K562 (cell line): ENCODE measurements at regions of chr1 and their contacts with region 1.

Region 1: GRCh38 chr1:100866041-100866900 is 28.4 kb downstream of the EXTL2 start:
- DNase-seq: peak; percentile 31 to 48 (median 38)
- ATAC-seq: peak; percentile 84
- H3K4me3 ChIP-seq: no peak overlapping the region
- H3K27ac ChIP-seq: no peak overlapping the region
- H3K4me1 ChIP-seq: no peaks in the 10 kb centered on the region
- H3K27me3 ChIP-seq: no peaks in the 10 kb centered on the region
- CTCF ChIP-seq: peak; percentile 39 to 77 (median 58); a peak in 4 of 6 replicates
- EP300 ChIP-seq: no peak
- POLR2A ChIP-seq: no peak
- RAD21 ChIP-seq: peak; percentile 94

Region 2: DNA sequence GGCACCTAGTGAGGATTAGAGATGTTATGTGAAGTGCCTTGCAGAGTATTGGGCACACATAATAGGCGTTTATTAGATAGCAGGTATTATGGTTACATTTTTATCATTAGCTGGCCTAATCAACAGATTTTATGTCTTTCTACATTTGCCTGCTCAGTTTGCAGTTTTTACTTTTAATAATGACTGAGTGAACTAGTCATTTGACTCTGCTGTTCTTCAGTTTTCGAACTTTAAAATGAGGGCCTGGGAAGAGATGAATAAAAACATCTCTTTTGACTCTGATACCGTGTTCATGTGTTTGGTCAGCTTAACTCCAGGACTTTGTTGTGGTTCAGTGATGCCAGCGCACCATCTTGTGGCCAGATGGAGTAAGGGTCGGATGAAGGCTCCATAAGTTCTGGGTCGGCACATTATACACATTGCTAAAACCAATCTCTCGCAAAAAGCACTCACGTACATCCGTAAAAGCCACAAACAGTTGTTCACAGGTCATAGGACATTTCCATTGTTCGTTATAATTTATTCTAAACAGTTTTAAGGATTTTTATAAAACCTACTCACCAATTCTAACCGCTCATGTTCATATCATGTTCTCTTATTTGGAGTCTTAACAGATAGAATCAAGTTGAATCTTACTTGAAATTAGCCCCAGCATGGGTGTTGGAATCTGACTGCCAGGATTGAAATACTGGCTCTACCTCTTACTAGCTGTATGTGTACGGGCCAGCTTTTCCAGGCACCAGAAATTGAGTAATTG is 406.7 kb before region 1 on chr1:
- CTCF ChIA-PET with region 1: interaction called, 13 read pairs
- POLR2A ChIA-PET with region 1: no interaction called
- in situ Hi-C with region 1: no loop called
- intact Hi-C with region 1: loop called (anchors 1 kb)
- DNase-seq: peak in 3 of 4 experiments; percentile 38 to 76 (median 57)
- ATAC-seq: peak; percentile 89
- H3K4me3 ChIP-seq: no peak overlapping the region
- H3K27ac ChIP-seq: no peak overlapping the region
- H3K4me1 ChIP-seq: peaks cover 0 to 6% of the 10 kb centered on the region in 2 experiments; a peak in 3 of 5 replicates
- H3K27me3 ChIP-seq: no peaks in the 10 kb centered on the region
- CTCF ChIP-seq: peak; percentile 72 to 86 (median 84)
- EP300 ChIP-seq: no peak
- POLR2A ChIP-seq: no peak
- RAD21 ChIP-seq: peak; percentile 90 to 91

Region 3: GRCh38 chr1:100543640-100544039 is 322.6 kb before region 1 on chr1:
- CTCF ChIA-PET with region 1: no interaction called
- POLR2A ChIA-PET with region 1: no interaction called
- in situ Hi-C with region 1: no loop called
- intact Hi-C with region 1: loop called (anchors 5 kb)
- DNase-seq: peak in 2 of 4 experiments; percentile 57 to 58
- ATAC-seq: peak; percentile 96
- H3K4me3 ChIP-seq: no peak overlapping the region
- H3K27ac ChIP-seq: no peak overlapping the region
- H3K4me1 ChIP-seq: peaks cover 0 to 15% of the 10 kb centered on the region in 2 experiments; a peak in 2 of 5 replicates
- H3K27me3 ChIP-seq: peaks cover 22 to 24% of the 10 kb centered on the region in 2 experiments
- CTCF ChIP-seq: peak; percentile 66 to 68 (median 67)
- EP300 ChIP-seq: no peak
- POLR2A ChIP-seq: no peak
- RAD21 ChIP-seq: peak in 1 of 2 experiments; percentile 54; a peak in 2 of 4 replicates

Region 4: DNA sequence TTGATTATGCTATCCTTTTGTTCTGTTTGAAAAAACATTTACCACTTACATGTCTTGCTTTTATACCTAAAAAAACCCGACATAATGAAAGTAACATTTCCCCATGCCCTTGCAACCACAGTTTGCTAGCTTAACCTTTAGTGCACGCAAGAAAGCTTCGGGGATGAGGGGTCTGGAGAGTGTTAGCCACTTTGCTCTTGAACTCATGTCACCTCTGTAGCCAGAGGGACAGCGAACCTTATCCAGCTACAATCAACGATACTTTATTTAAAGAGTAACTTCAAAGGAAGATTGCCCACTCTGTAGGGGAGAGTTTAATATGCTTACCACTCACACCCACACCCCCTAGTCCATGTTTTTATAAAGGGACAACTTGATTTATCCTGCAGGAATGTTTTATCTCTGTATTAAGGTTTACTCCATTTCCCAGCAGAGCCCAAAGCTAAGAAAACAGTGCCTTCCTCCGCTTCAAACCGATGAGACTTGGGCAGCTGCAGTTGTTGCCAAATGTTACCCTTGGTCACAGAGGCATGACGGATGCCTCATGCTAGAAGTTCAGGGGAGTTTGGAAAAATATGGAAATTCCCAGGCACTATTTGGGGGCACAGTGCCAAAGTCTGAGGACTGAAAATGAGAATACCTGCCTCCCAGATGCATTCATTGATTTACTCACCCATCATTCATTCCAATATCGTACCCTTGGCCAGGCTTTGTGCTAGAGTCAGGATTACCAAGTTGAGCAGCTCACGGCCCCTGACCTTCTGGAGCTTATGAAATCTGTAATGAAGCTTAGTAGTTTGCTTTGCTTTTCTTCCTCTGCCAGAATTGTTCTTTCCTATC is 208.2 kb before region 1 on chr1:
- CTCF ChIA-PET with region 1: no interaction called
- POLR2A ChIA-PET with region 1: no interaction called
- in situ Hi-C with region 1: no loop called
- intact Hi-C with region 1: no loop called
- DNase-seq: no peak
- ATAC-seq: no peak
- H3K4me3 ChIP-seq: no peak overlapping the region
- H3K27ac ChIP-seq: no peak overlapping the region
- H3K4me1 ChIP-seq: no peaks in the 10 kb centered on the region
- H3K27me3 ChIP-seq: peaks cover 0 to 4% of the 10 kb centered on the region in 2 experiments; a peak in 1 of 5 replicates
- CTCF ChIP-seq: no peak
- EP300 ChIP-seq: no peak
- POLR2A ChIP-seq: no peak
- RAD21 ChIP-seq: no peak

Region 5: GRCh38 chr1:100750005-100750885 is 116.0 kb before region 1 on chr1:
- CTCF ChIA-PET with region 1: interaction called, 5 read pairs
- POLR2A ChIA-PET with region 1: no interaction called
- in situ Hi-C with region 1: loop called (anchors 10 kb)
- intact Hi-C with region 1: loop called (anchors 1 kb)
- DNase-seq: peak in 2 of 4 experiments; percentile 17 to 25
- ATAC-seq: peak; percentile 87
- H3K4me3 ChIP-seq: no peak overlapping the region
- H3K27ac ChIP-seq: no peak overlapping the region
- H3K4me1 ChIP-seq: no peaks in the 10 kb centered on the region
- H3K27me3 ChIP-seq: no peaks in the 10 kb centered on the region
- CTCF ChIP-seq: peak; percentile 51 to 57 (median 57)
- EP300 ChIP-seq: no peak
- POLR2A ChIP-seq: no peak
- RAD21 ChIP-seq: peak; percentile 50 to 82; a peak in 3 of 4 replicates

Region 6: GRCh38 chr1:101136739-101137138 is 270.5 kb after region 1 on chr1:
- CTCF ChIA-PET with region 1: no interaction called
- POLR2A ChIA-PET with region 1: no interaction called
- in situ Hi-C with region 1: no loop called
- intact Hi-C with region 1: no loop called
- DNase-seq: no peak
- ATAC-seq: peak; percentile 64
- H3K4me3 ChIP-seq: no peak overlapping the region
- H3K27ac ChIP-seq: no peak overlapping the region
- H3K4me1 ChIP-seq: peaks cover 0 to 20% of the 10 kb centered on the region in 2 experiments; a peak in 3 of 5 replicates
- H3K27me3 ChIP-seq: no peaks in the 10 kb centered on the region
- CTCF ChIP-seq: peak in 2 of 3 experiments; percentile 19 to 55; a peak in 2 of 6 replicates
- EP300 ChIP-seq: peak; percentile 5; the same call in 1 of the 2 replicates
- POLR2A ChIP-seq: no peak
- RAD21 ChIP-seq: peak; percentile 54 to 70